ENCODE measurements at regions of chr16 and their contacts with region 1.

Region 1: GRCh38 chr16:77643176-77643575 is 79.1 kb upstream of the NUDT7 start:
- H3K4me3 ChIP-seq: no peak overlapping the region
- H3K27ac ChIP-seq: no peak overlapping the region
- H3K4me1 ChIP-seq: no peaks in the 10 kb centered on the region
- CTCF ChIP-seq: no peak

Region 2: DNA sequence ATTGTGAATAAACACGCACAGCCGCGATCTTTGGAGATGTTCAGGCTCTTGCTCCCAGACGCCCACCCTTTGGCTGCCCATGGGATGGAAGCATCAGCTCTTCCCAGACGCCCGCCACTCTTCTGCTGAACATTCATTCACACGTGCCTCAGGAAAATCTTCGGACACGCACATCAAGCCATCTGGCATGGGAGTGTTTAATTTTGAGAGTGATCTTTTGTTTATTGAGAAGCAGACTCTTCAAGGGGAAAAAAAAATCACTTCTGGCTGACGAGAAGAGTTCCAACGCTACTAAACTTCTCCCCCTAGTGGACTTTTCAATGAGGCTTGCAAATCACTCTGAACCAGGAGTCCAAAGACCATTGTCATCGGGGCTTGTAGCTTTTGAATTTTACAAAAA is 17.1 kb after region 1 on chr16:
- CTCF ChIA-PET with region 1: interaction called, 10 read pairs
- POLR2A ChIA-PET with region 1: no interaction called
- H3K4me3 ChIP-seq: no peak overlapping the region
- H3K27ac ChIP-seq: no peak overlapping the region; the same call in 1 of the 2 replicates
- H3K4me1 ChIP-seq: 0 out of 2 replicates have a peak, but pooled peaks cover 2% of the 10 kb centered on the region
- CTCF ChIP-seq: peak; percentile 45; the same call in 1 of the 2 replicates

Region 3: GRCh38 chr16:77782694-77783093 is 139.5 kb after region 1 on chr16:
- CTCF ChIA-PET with region 1: no interaction called
- POLR2A ChIA-PET with region 1: no interaction called
- H3K4me3 ChIP-seq: no peak overlapping the region
- H3K27ac ChIP-seq: no peak overlapping the region
- H3K4me1 ChIP-seq: peaks cover 7% of the 10 kb centered on the region
- CTCF ChIP-seq: no peak

Measured in HEK293 (cell line).